ENCODE measurements at regions of chr9 and their contacts with region 1.

Region 1: GRCh38 chr9:90914868-90915483 is 113.4 kb downstream of the SYK start:
- DNase-seq: peak; percentile 79 to 87
- ATAC-seq: peak; percentile 89 to 99
- H3K4me3 ChIP-seq: no peak overlapping the region
- H3K27ac ChIP-seq: no peak overlapping the region
- H3K4me1 ChIP-seq: no peaks in the 10 kb centered on the region
- CTCF ChIP-seq: peak; percentile 83
- EP300 ChIP-seq: no peak
- POLR2A ChIP-seq: no peak
- RAD21 ChIP-seq: peak; percentile 95

Region 2: DNA sequence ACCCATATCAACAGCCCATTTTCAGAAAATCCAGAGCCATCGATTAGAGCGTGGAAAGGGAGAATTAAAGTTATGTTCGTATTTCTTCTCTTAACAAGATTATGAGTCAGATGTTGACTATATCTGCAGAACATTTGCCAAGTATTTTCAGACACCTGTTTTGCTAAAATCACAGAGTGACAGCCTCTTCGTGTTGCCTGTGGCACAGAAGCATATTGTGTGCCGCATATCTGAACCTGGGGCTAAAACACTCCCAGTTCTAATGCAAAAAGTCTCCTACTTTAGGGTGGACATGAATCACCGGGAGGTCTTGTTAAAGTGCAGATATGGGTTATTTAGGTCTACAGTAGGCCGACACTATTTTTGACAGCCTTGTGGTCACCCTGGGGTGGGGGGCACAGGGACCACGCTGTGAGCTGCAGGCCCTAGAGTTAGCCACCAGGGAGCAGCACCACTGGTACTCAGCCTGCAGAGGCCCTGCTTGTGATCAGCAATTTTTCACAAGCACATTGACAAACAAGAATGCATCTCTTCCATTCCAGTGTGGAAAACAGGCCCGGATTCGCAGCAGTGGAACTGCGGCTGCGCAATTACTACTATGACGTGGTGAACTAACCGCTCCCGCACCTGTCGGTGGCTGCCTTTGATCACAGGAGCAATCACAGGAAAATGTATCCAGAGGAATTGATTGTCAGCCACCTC is 19.8 kb before region 1 on chr9:
- CTCF ChIA-PET with region 1: interaction called, 15 read pairs
- POLR2A ChIA-PET with region 1: no interaction called
- DNase-seq: peak; percentile 22 to 48
- ATAC-seq: peak; percentile 63 to 86; a peak in 5 of 6 replicates
- H3K4me3 ChIP-seq: no peak overlapping the region
- H3K27ac ChIP-seq: no peak overlapping the region
- H3K4me1 ChIP-seq: no peaks in the 10 kb centered on the region
- CTCF ChIP-seq: peak; percentile 53
- EP300 ChIP-seq: no peak
- POLR2A ChIP-seq: no peak
- RAD21 ChIP-seq: peak; percentile 27 to 29; a peak in 2 of 5 replicates

Region 3: DNA sequence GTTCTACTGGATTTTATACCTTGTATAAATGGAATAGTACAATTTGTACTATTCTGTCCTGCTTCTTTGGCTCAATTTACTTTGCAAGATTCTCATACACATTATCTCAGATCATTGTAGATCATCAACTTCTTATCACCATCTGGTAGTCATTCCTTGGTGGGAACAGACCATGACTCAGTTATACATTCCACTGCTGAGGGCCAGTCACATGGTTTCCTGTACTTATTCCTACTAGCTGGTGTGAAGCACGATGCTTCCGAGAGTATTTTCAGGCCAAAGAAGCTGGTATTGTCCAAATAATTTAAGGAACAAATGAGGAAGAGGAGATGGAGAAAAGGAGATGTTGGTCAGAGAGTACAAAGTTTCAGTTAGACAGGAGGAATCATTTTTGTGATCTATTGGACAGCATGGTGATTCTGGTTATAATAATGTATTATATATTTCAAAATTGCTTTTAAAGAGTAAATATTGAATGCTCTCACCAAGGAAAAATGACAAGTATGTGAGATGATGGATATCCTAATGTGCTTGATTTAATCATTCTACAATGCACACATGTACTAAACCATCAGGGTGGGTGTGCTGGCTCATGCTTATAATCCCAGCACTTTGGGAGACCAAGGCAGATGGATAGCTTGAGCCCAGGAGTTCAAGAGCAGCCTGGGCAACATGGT is 10.7 kb after region 1 on chr9:
- CTCF ChIA-PET with region 1: interaction called, 20 read pairs
- POLR2A ChIA-PET with region 1: no interaction called
- DNase-seq: peak in 1 of 2 experiments; percentile 23
- ATAC-seq: peak in 1 of 2 experiments; percentile 39; a peak in 1 of 6 replicates
- H3K4me3 ChIP-seq: no peak overlapping the region
- H3K27ac ChIP-seq: no peak overlapping the region; a peak in 1 of 6 replicates
- H3K4me1 ChIP-seq: peaks cover 13% of the 10 kb centered on the region; the same call in 2 of the 3 replicates
- CTCF ChIP-seq: no peak
- EP300 ChIP-seq: no peak
- POLR2A ChIP-seq: no peak
- RAD21 ChIP-seq: no peak

Region 4: DNA sequence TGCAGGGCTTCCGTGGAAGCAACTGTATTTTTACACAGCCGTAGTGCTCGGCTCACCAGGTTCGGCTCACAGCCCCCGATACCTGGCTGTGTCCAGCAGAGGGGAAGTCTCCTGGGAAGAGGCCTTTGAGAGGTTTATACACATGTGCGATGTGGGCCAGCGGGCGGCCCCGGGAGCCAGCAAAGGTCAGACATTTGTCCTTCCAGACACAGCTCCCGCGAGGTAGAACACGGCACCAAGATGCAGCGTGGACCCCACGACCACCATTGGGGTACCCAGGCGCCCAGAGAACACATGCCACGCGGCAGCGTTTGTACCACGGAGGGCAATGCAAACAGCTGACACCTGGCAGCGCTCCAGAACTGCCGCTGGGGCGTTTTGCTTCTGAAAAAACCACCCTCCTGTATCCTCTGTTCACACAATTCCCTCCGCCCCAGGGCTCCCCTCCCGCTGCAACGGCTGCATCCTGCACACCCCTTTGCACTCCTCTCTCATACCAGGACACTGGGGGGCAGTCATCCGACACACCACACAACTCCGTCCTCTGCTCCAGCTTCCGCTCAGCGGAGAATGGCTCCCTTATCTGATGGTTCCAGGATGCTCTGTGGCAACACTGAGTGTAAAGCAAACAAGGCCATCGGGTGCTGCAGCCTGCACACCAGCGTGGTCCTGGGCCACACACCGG is 122.0 kb after region 1 on chr9:
- CTCF ChIA-PET with region 1: interaction called, 19 read pairs
- POLR2A ChIA-PET with region 1: no interaction called
- DNase-seq: peak; percentile 77 to 91
- ATAC-seq: peak; percentile 96 to 98
- H3K4me3 ChIP-seq: no peak overlapping the region
- H3K27ac ChIP-seq: peak overlapping the region; percentile 66 to 89
- H3K4me1 ChIP-seq: peaks cover 21% of the 10 kb centered on the region
- CTCF ChIP-seq: peak; percentile 75
- EP300 ChIP-seq: no peak
- POLR2A ChIP-seq: no peak
- RAD21 ChIP-seq: peak; percentile 91 to 96

Region 5: GRCh38 chr9:91422758-91423711 is 508.1 kb after region 1 on chr9:
- CTCF ChIA-PET with region 1: interaction called, 85 read pairs
- POLR2A ChIA-PET with region 1: interaction called, 4 read pairs
- DNase-seq: peak; percentile 61 to 71
- ATAC-seq: peak; percentile 35 to 55
- H3K4me3 ChIP-seq: peak overlapping the region; percentile 73
- H3K27ac ChIP-seq: peak overlapping the region; percentile 87 to 95
- H3K4me1 ChIP-seq: peaks cover 54% of the 10 kb centered on the region
- CTCF ChIP-seq: peak; percentile 18; the same call in 1 of the 3 replicates
- EP300 ChIP-seq: peak in 1 of 2 experiments; percentile 21; a peak in 1 of 5 replicates
- POLR2A ChIP-seq: no peak
- RAD21 ChIP-seq: peak in 1 of 2 experiments; percentile 23; a peak in 1 of 5 replicates

Region 6: DNA sequence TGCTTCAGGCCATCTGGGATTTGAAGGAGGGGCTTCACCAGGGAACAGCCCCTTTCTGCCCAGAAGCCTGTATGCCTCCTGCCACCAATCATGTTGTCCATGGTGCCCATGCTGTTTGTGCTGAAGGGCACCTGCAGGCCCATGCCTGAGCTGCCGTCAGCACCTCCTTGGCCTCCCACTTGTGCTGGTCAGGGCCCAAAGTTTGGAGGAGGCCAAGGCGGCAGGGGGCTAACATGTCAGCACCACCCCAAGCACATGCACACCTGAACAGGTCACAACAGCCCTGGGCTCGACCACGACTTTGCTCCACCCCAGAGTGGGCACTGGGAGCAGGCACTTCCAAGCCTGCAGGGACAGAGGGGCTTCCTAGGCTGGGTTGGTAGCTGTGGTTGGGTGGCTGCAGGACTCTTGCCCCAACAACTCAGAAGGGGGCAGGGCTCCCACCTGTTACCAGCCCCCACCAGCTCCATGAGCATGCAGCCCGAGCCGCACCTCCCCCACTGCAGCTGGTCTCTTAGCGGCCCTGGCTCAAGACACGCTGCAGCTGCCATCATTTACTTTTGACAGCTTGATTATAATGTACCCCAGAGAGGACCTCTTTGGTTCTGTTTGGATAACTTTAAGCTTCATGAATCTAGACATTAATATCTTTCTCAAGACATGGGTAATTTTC is 528.5 kb after region 1 on chr9:
- CTCF ChIA-PET with region 1: interaction called, 11 read pairs
- POLR2A ChIA-PET with region 1: no interaction called
- DNase-seq: no peak
- ATAC-seq: no peak
- H3K4me3 ChIP-seq: no peak overlapping the region
- H3K27ac ChIP-seq: no peak overlapping the region
- H3K4me1 ChIP-seq: no peaks in the 10 kb centered on the region
- CTCF ChIP-seq: no peak
- EP300 ChIP-seq: no peak
- POLR2A ChIP-seq: no peak
- RAD21 ChIP-seq: no peak

Region 7: DNA sequence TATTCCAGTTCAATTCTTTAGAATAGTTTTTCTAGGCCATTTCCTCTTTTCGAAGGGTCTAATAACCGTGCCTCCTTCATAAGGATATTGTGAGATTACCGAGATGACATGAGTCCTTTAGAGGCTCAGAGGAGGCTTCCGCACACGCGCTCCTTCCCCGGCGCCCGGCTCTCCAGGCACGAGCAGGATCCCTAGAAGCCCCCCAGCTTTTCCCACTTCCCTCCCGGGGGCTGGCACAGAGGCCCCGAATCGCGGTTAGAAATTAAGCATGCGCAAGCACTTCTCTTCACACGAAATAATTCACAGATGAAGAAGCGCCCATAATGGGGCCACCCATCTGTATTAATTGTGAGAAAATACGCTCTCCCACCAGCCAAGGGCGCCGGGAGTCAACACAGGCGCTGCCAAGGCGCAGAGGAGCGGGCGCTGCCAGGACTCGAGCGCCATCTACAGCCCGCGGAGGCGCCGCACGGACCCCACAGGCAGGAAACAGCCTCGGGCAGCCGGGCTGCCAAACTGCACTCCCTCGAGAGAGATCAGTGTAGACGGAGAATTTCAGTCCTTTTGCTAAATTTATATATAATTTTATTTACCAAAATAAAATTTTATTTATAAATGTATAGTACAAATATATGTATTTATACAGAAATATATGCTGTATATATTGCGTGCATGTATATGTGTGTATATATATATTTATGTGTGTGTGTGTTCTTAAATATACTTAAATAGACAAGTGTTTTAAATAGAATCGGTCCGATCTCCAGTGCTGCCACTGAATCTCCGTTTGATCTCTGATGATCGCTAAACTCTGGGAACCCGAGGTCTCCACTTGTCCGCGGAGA is 766.7 kb after region 1 on chr9:
- CTCF ChIA-PET with region 1: interaction called, 54 read pairs
- POLR2A ChIA-PET with region 1: no interaction called
- DNase-seq: peak; percentile 58 to 85
- ATAC-seq: peak; percentile 98 to 100
- H3K4me3 ChIP-seq: no peak overlapping the region
- H3K27ac ChIP-seq: peak overlapping the region in 1 of 2 experiments; percentile 64; a peak in 2 of 6 replicates
- H3K4me1 ChIP-seq: no peaks in the 10 kb centered on the region
- CTCF ChIP-seq: peak; percentile 87
- EP300 ChIP-seq: no peak
- POLR2A ChIP-seq: no peak
- RAD21 ChIP-seq: peak; percentile 83 to 90

Measured in A549 (cell line).